ENCODE measurements at regions of chr6 and their contacts with region 1.

Region 1: DNA sequence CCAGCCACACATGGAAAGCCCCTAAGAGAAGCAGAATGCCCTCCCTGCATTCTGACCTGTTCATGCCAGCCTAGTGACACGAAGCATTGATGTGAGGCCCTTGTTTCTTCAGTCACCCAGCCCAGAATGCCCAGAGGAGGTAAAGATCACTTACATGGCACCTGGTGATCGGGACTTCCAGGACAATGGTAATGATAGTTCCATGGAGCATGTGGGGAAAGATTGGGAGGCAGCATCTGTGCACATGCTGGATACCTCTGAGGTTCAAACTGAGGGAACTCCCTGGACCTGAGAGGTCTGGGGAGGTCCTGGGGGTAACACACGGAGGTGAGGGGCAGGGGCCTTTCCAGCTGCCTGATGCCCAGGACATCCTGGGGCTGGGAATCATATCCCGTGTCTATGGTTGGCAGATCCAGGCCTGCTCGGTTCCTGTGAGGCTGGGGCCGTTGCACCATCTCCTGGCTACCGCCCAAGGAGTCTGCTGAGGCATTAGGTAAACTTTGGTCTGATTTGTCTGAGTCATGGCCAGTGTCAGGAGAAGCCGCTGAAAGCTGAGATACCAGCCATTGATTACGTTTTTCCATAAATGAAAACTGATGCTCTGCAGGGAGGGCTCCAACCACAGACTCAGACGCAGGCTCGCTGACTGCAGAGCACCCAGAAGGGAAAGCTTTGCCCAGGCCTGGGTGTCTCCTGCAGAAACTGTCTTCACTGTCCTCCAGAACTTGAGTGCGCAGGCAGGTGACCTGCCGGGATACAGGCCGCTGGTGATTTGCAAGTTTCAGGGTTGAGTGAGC is 14.4 kb downstream of the TRAF3IP2 start:
- DNase-seq: peak; percentile 76 to 90
- ATAC-seq: peak; percentile 90 to 97
- H3K4me3 ChIP-seq: peak overlapping the region; percentile 18; the same call in 1 of the 3 replicates
- H3K27ac ChIP-seq: peak overlapping the region; percentile 90 to 91
- H3K4me1 ChIP-seq: peaks cover 60% of the 10 kb centered on the region
- CTCF ChIP-seq: no peak
- EP300 ChIP-seq: peak in 1 of 2 experiments; percentile 54; a peak in 1 of 5 replicates
- POLR2A ChIP-seq: no peak
- RAD21 ChIP-seq: peak in 1 of 2 experiments; percentile 2; a peak in 1 of 5 replicates

Region 2: GRCh38 chr6:111468329-111469012 is 122.8 kb before region 1 on chr6:
- CTCF ChIA-PET with region 1: no interaction called
- POLR2A ChIA-PET with region 1: no interaction called
- DNase-seq: no peak
- ATAC-seq: no peak
- H3K4me3 ChIP-seq: no peak overlapping the region
- H3K27ac ChIP-seq: no peak overlapping the region
- H3K4me1 ChIP-seq: peaks cover 31% of the 10 kb centered on the region
- CTCF ChIP-seq: no peak
- EP300 ChIP-seq: no peak
- POLR2A ChIP-seq: no peak
- RAD21 ChIP-seq: no peak

Region 3: DNA sequence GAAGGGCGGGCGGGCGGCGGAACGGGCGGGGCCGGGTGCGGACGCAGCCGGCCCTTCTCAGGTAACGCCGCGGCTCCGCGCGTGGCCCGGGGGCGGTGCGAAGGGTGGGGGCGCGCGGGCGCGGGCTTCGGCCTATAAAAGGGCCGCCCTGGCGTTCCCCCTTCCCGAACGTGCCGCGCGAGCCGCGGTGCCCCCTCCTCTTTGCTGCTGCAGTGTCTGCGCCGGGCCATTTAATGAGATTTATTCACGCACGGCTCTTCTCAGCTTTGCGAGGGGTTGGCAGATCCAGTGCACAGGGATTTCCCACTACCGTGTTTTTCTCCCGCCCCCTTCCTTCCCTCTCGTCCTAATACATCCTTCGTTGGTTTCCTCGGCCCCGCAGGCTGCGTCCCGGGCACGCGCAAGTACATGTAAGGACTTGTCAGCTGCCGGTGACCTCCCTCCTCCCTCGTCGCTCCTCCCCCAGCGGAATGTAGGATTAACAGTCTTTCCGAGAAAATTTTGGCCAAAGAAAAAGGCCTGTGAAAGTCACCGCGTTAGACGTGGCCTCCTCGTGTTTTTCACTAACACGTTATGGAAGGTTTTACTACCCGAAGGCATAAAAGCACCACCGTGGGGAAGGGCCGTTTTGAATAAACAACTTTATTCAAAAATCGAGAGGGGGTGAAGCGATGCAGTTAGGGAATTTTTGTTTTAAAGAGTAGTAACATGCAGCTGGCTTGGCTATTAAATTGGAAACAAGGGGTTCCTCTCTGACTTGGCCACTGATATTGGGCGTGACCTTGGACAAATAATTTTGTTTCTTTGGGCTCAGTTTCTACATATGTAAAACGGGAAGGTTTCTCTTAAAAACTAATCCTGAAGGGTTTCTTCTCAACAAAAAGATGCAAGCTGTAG is 107.3 kb before region 1 on chr6:
- CTCF ChIA-PET with region 1: no interaction called
- POLR2A ChIA-PET with region 1: interaction called, 14 read pairs
- DNase-seq: peak; percentile 66 to 93
- ATAC-seq: peak; percentile 80 to 86
- H3K4me3 ChIP-seq: peak overlapping the region; percentile 97
- H3K27ac ChIP-seq: peak overlapping the region; percentile 99
- H3K4me1 ChIP-seq: peaks cover 30% of the 10 kb centered on the region
- CTCF ChIP-seq: no peak
- EP300 ChIP-seq: no peak
- POLR2A ChIP-seq: peak; percentile 45; the same call in 1 of the 2 replicates
- RAD21 ChIP-seq: no peak

Region 4: GRCh38 chr6:111605100-111605751 is 13.9 kb after region 1 on chr6:
- CTCF ChIA-PET with region 1: interaction called, 3 read pairs
- POLR2A ChIA-PET with region 1: interaction called, 11 read pairs
- DNase-seq: peak; percentile 29 to 31
- ATAC-seq: peak; percentile 61 to 71
- H3K4me3 ChIP-seq: peak overlapping the region; percentile 46
- H3K27ac ChIP-seq: peak overlapping the region; percentile 78 to 87
- H3K4me1 ChIP-seq: peaks cover 42% of the 10 kb centered on the region
- CTCF ChIP-seq: no peak
- EP300 ChIP-seq: no peak
- POLR2A ChIP-seq: no peak
- RAD21 ChIP-seq: no peak